Tibial artery (tissue), 4 donors: ENCODE measurements at regions of chr12 and their contacts with region 1.

Region 1: DNA sequence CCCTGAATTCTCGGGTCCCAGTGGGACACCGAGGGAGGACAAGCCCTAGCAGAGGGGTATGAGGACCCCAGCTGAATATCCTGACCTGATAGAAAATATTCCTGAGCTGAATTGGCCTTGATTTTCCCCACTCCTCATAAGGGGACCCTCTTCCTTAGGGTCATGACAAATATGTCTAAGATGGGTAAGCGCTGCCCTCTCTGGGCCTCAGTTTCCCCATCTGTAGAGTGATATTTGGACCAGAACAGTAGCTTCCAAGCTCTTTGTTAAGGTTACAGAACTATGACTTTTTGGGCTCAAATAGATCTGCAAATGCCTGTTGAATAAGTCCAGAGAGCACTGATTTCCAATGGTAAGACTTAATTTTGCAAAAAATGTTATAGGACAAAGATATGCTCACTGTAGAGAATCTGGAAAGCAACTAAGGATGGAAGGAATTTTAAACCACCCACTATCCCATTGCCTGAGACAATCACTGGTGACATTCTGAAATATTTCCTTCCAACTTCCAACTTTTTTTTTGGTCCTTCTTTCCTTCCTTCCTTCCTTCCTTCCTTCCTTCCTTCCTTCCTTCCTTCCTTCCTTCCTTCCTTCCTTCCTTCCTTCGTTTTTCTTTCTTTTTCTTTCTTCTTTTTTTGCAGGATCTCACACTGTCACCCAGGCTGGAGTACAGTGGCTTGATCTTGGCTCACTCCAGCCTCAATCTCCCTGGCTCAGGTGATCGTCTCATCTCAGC is 32.0 kb downstream of the MYL2 start:
- DNase-seq: no peak
- H3K4me3 ChIP-seq: peak overlapping the region; percentile 51 to 64
- H3K27ac ChIP-seq: peak overlapping the region in 1 of 2 donors; percentile 46
- H3K4me1 ChIP-seq: no peaks in the 10 kb centered on the region
- H3K27me3 ChIP-seq: peaks cover 0 to 8% of the 10 kb centered on the region in 2 donors
- CTCF ChIP-seq: no peak

Region 2: GRCh38 chr12:110613771-110614684 is 274.4 kb before region 1 on chr12 and contains the start of gene TCTN1:
- intact Hi-C with region 1: loop called (anchors 10 kb)
- DNase-seq: peak; percentile 97 to 98
- H3K4me3 ChIP-seq: peak within 1 kb of the TSS; percentile 63 to 79
- H3K27ac ChIP-seq: peak within 1 kb of the TSS; percentile 76 to 78
- H3K4me1 ChIP-seq: peaks cover 0 to 16% (median 7%) of the 10 kb centered on the region in 4 donors
- H3K27me3 ChIP-seq: no peaks in the 10 kb centered on the region
- CTCF ChIP-seq: no peak

Region 3: GRCh38 chr12:110742718-110743570 is 145.5 kb before region 1 on chr12 and contains the start of gene PPP1CC:
- intact Hi-C with region 1: loop called (anchors 5 kb)
- DNase-seq: peak; percentile 96
- H3K4me3 ChIP-seq: peak within 1 kb of the TSS; percentile 84 to 95
- H3K27ac ChIP-seq: peak within 1 kb of the TSS; percentile 88 to 90
- H3K4me1 ChIP-seq: peaks cover 0 to 53% (median 33%) of the 10 kb centered on the region in 4 donors
- H3K27me3 ChIP-seq: no peaks in the 10 kb centered on the region
- CTCF ChIP-seq: no peak